Sciatic nerve (tissue), 2 donors: ENCODE measurements at regions of chr4 and their contacts with region 1.

Region 1: GRCh38 chr4:127604949-127605709 is 27.6 kb upstream of the INTU start:
- DNase-seq: no peak
- ATAC-seq: no peak

Region 2: DNA sequence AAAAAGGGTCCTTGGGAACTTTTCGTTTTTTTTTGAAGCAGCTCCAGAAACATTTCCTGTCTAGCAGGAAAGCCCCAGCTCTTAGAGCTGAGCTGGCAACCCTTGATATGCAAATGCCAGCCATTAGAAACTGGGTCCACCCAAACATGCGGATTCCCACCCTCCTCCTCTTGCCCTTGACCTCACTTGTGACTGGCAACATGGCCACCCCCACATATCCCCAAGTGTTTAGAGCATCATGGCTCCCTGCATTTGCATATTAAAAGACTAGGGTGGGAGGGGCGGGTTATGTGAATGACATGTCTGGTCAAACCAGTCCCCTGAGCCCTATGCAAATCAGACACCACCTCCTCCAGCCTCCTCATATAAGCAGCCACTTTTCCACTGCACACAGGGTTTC is 1619.3 kb before region 1 on chr4:
- intact Hi-C with region 1: no loop called
- DNase-seq: no peak
- ATAC-seq: no peak

Region 3: DNA sequence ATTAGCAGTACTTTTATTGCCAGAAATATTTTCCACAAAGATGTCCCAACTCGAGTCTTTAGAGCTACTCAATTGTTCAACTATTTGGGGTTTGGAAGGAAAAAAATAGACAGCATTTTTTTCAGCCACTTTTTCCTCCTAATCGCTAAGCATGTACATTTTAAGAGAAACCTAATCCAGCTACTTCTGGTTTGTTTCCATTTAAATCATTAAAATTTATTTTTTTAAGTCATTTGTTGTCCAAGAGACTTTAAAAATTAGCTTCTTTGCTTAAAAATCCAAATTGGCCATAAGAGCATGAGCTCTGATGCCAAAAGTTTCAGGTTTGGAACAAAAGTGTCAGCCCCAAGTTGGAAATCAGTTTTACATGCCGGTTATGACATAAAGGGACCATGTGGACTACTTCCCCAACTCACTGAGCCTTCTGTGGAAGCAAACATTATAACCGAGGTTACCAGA is 158.7 kb before region 1 on chr4:
- intact Hi-C with region 1: no loop called
- DNase-seq: no peak
- ATAC-seq: peak; percentile 63

Region 4: DNA sequence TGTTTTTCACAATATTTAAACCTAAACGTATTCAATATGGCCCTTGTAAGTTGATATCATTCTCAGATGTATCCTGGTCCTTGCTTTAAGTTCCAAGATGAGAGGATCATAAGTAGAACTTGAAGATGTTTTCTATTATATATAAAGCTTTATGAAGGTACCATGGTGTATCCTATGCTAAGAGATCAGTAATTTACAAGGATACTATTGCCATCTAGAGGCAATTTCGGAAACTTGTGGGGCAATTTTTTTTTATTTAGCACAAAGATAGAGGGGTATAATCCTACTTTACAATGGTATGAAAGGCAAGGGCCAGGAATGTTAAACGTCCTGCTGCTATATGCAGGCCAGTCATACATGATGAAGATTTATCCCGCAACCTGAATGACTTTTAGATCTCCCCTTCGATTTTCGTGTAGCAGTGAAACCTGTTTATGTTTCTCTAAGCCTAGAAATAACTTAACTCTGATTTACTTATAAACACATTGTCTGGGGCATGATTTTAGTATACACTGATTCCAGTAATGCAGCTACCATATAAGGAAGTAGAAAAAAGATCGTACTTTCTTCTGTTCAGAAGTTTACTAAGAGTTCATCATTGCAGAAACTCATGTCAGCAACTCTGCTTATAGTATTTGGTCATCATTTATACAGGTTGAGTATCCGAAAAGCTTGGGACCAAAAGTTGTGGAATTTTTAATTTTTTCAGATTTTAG is 127.6 kb after region 1 on chr4:
- intact Hi-C with region 1: loop called (anchors 10 kb)
- DNase-seq: no peak
- ATAC-seq: peak; percentile 55